ENCODE measurements at regions of chr16 and their contacts with region 1.

Region 1: GRCh38 chr16:31458844-31459721 is at the start of gene ARMC5:
- DNase-seq: peak; percentile 85

Region 2: DNA sequence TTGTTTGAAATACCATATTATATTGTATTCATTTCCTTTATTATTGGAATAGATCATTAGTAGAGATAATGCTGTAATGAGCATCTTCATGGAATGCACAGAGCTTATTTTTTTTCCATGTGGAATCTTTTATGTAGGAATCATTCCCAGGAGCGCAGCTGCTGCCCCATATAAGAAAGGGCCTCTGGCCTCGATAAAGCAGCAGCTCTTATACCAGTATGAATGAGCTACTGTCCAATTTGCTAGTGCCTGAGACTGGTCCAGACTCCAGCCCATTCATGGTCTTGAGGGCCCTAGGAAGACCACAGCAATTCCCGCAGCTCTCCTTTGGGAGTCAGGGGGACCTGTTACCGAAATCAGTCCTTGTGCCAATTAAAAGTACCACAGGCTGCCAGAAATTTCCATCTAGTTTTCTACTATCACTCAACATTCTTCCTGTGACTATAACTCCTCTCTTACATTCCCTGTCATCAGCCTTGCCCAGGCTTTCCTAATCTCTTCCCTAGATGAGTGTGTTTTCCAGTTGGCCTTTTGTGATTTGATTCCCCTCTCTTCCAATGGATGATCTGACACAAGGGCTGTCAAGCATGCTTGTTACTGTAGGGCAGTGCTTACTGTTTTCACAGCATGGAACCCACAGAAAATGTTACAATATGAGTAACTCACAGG is 18.4 kb before region 1 on chr16:
- CTCF ChIA-PET with region 1: interaction called, 5 read pairs
- POLR2A ChIA-PET with region 1: interaction called, 20 read pairs
- DNase-seq: no peak

Region 3: DNA sequence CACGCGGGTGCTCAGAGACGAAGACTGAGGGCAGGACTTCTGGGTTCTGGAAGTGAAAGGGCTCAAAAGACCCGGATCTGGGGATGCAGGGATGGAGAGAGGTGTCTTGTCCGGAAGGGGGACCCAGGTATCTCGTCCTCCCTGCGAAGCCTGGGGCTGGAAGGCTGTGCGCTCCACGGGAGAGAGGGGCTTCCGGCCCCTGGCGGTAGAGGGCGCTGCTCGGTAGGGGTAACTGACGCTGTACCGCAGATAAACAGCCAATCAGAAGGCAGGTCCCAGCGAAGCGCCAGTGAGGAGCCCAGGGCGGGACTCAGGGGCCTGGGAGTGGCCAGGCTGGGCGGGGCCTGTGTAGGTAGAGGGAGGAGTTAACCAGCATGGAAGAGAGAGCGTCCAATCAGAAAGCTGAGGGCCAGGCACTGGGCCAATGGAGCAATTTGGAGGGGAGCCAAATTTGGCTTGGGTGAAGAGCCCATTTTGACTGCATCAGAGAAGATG is 13.7 kb after region 1 on chr16:
- CTCF ChIA-PET with region 1: interaction called, 5 read pairs
- POLR2A ChIA-PET with region 1: interaction called, 27 read pairs
- DNase-seq: peak; percentile 83

Region 4: DNA sequence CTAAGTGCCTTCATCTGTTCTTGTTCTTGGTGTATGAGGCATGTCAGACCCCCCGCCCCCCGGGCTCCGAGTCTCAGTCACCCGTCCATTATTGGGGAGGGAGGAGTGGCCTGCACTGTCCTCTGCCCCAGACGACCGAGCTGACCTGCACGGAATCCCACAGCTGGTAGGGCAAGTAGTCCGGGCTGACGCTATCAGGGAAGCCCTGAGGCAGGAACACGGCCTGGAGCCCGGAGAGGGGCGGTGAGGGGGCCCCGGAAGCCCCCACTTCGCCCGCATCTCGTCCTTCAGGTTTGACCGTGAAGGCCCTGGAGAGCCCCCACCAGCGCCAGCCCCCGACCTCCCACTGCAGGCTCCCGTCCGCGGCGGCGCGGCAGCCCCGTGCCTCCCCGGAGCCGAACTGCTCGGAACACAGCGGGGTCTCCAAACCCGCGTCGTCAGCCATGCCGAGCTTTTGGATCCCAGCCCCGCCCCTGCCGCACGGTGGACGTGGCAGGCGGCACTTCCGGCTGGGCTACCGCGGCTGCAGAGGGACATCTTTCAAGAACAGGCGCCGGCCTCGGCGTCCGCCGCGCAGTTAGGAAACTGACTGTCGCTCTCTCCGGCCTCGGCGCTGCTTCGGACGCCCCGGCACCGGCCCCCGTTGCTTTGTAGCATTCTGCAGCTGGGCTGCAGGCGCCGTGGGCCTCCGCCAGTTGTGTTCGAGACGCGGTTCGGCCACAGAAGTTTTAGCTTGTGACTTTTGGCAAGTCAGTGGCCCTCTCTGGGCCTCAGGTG is 49.0 kb after region 1 on chr16 and contains the start of gene RUSF1:
- CTCF ChIA-PET with region 1: interaction called, 5 read pairs
- POLR2A ChIA-PET with region 1: interaction called, 12 read pairs
- DNase-seq: peak; percentile 87

Measured in HEK293T (cell line).